HEK293 (cell line): ENCODE measurements at regions of chr10 and their contacts with region 1.

Region 1: DNA sequence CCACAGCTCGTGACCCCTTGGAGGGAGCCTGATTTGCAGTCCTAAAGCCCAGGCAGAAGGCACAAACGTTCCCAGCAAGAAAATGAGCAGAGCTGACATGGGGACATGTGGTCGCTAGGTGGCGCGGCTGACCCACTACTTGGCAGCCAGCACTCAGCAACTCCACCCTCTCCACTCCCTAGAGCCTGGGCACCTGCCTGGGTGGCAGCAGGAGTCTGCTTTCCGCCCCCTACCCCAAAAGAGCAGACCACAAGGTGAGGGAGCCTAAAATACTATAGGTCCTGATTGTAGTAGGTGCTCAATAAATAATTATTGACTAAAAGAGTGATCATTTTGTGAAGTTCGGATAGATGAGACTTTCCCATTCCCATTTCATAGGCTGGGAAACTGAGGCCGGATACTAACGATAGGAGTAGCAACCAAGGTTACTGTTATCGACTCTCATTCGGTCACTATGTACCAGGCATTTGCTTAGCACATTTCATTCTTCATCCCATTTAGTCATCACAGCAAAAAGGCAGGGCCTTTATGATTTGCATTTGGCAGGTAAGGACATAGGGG is 57.4 kb downstream of the NEUROG3 start:
- H3K4me3 ChIP-seq: no peak overlapping the region
- H3K27ac ChIP-seq: no peak overlapping the region
- H3K4me1 ChIP-seq: no peaks in the 10 kb centered on the region
- CTCF ChIP-seq: peak; percentile 84

Region 2: GRCh38 chr10:69527961-69528360 is 12.2 kb after region 1 on chr10:
- CTCF ChIA-PET with region 1: interaction called, 12 read pairs
- POLR2A ChIA-PET with region 1: no interaction called
- H3K4me3 ChIP-seq: no peak overlapping the region
- H3K27ac ChIP-seq: no peak overlapping the region
- H3K4me1 ChIP-seq: no peaks in the 10 kb centered on the region
- CTCF ChIP-seq: no peak

Region 3: DNA sequence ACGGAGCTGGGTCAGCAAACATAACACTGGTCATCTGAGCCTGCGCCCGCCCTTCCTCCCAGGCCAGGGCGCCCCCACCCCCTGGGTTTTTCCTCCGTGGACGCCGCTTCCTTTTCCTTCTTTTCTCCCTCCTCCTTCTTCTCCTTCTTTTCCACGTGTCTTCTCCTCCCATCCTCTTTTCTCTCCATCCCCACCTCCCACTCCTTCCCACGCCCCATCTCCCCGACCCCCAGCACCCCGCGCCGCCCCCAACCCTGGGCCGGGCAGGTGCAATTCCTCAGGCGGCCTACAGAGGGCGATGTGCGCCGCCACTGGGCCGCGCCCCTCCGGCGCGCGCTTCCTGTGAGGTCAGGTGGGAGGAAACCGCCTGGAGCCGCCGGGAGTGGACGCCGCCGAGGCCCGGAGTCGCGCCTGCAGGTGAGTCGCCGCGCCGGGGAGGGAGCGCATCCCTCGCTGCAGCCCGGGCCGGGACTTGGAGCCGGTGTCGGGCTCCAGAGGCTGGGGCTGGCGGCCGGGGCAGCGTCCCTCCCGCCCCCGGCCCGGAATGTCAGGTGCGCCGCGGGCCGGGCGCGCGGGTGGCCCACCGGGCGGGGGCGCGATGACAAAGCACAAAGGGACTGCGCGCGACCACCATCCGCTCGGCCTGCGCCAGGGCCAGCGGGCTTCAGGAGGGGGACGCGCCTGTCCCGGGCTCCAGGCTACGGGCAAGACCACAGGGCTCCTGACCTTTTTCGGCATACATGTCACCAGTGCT is 114.3 kb after region 1 on chr10 and contains the start of gene FAM241B:
- CTCF ChIA-PET with region 1: interaction called, 284 read pairs
- POLR2A ChIA-PET with region 1: no interaction called
- H3K4me3 ChIP-seq: peak within 1 kb of the TSS; percentile 59
- H3K27ac ChIP-seq: peak within 1 kb of the TSS; percentile 61; the same call in 1 of the 2 replicates
- H3K4me1 ChIP-seq: no peaks in the 10 kb centered on the region
- CTCF ChIP-seq: peak; percentile 96

Region 4: GRCh38 chr10:69678005-69678654 is 162.4 kb after region 1 on chr10:
- CTCF ChIA-PET with region 1: no interaction called
- POLR2A ChIA-PET with region 1: no interaction called
- H3K4me3 ChIP-seq: no peak overlapping the region
- H3K27ac ChIP-seq: no peak overlapping the region
- H3K4me1 ChIP-seq: no peaks in the 10 kb centered on the region
- CTCF ChIP-seq: no peak